GM18951 (cell line): ENCODE measurements at regions of chr3 and their contacts with region 1.

Region 1: DNA sequence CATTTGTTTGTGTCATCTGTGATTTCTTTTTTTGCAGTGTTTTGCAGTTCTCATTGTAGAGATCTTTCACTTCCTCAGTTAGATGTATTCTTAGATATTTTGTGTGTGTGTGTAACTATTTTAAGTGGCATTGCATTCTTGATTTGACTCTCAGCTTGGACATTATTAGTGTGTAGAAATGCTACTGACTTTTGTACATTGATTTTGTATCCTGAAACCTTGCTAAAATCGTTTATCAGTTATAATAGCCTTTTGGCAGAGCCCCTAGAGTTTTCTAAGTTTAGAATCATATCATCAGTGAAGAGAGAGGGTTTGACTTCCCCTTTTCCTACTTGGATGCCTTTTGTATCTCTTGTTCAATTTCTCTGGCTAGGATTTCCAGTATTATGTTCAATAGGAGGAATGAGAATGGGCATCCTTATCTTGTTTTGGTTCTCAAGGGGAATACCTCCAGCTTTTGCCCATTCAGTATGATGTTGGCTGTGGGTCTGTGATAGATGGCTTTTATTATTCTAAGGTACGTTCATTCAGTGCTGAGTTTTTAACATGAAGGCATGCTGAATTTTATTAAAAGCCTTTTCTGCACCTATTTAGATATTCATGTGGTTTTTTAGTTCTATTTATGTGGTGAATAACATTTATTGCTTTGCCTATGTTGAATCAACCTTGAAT is 211.7 kb downstream of the MBNL1 start:
- POLR2A ChIP-seq: no peak

Region 2: GRCh38 chr3:152524198-152525140 is 44.1 kb after region 1 on chr3:
- in situ Hi-C with region 1: loop called (anchors 5 kb)
- POLR2A ChIP-seq: no peak

Region 3: DNA sequence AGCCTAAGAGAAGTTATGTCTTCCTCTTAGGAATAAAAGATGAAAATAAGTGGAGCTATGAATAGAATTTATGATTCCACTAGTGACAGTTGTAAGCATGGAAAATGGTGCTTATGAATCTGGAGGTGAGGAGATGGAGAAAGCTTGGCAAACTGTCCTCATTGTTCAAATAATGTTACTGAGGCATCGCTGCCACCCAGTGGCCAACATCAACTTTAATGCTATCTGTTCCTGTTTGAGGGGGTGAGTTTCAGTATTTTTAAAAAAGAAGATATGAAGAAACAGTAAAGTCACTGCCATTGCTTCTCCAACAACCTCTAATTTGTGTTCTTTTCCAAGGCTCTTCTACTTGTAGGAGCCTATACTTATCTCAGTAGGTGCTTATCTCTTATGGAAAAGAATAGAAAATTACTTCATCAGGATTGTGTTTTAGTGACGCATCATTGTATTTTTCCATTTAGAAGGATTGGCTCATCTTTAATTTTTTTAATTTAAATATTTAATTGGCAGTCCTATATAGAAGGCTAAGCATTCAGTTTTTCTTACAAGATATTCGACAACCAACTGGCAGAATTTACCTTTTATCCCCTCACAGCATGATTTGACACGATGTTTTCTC is 94.2 kb after region 1 on chr3:
- in situ Hi-C with region 1: loop called (anchors 10 kb)
- POLR2A ChIP-seq: no peak